Left cardiac atrium (tissue), 4 donors: ENCODE measurements at regions of chr7 and their contacts with region 1.

Region 1: GRCh38 chr7:156423876-156424275 is 216.7 kb upstream of the RNF32 start:
- DNase-seq: no peak
- ATAC-seq: no peak

Region 2: DNA sequence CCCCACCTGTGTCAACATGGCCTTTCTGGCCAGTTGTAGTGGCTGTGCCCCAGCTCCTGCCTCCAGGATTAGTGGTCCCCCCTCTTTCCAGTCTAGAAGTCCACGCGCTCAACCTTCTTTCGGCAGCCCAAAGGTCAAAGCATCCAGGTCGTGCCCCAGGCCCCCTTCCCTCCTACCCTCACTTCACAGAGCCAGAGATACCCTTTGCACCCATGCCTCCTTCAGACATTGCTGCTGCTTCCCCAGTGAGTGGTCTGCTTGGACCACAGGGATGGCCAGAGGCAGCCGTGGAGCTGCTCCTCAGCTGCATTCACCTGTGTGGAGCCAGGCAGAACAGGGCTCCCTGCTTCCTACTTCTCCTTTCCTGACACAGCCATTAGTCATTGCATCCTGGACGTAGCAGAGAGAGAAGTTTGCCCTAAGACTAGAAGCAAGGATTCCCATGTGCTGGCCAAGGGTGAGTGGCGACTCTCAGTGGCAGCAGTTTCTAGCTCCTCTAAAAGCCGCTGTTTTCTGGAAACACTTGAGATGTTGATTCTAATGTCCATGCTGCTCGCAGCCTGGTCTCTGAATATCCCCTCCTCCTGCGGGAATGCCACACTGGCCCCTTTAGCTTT is 368.6 kb before region 1 on chr7:
- intact Hi-C with region 1: no loop called
- DNase-seq: no peak
- ATAC-seq: no peak

Region 3: GRCh38 chr7:156389116-156389692 is 34.7 kb before region 1 on chr7:
- intact Hi-C with region 1: loop called in 1 of 2 experiments (anchors 2 kb)
- DNase-seq: no peak
- ATAC-seq: no peak